Stomach (tissue), 19 donors: ENCODE measurements at regions of chr6 and their contacts with region 1.

Region 1: GRCh38 chr6:109059571-109060021 is 35.0 kb downstream of the SESN1 start:
- DNase-seq: peak in 1 of 2 donors; percentile 64
- H3K4me3 ChIP-seq: peak overlapping the region in 1 of 4 donors; percentile 2
- H3K27ac ChIP-seq: peak overlapping the region in 4 of 5 donors; percentile 42 to 79 (median 70)
- H3K4me1 ChIP-seq: peaks cover 16 to 62% (median 35%) of the 10 kb centered on the region in 4 donors
- H3K27me3 ChIP-seq: no peaks in the 10 kb centered on the region
- CTCF ChIP-seq: peak in 4 of 7 experiments; percentile 6 to 41 (median 15)
- EP300 ChIP-seq: no peak
- POLR2A ChIP-seq: no peak

Region 2: GRCh38 chr6:108556861-108557544 is 502.6 kb before region 1 on chr6:
- intact Hi-C with region 1: no loop called
- DNase-seq: peak in 1 of 2 donors; percentile 65
- H3K4me3 ChIP-seq: peak overlapping the region; percentile 89 to 96 (median 92)
- H3K27ac ChIP-seq: peak overlapping the region; percentile 99 to 100 (median 100)
- H3K4me1 ChIP-seq: peaks cover 10 to 21% (median 19%) of the 10 kb centered on the region in 4 donors
- H3K27me3 ChIP-seq: no peaks in the 10 kb centered on the region
- CTCF ChIP-seq: no peak
- EP300 ChIP-seq: no peak
- POLR2A ChIP-seq: no peak

Region 3: DNA sequence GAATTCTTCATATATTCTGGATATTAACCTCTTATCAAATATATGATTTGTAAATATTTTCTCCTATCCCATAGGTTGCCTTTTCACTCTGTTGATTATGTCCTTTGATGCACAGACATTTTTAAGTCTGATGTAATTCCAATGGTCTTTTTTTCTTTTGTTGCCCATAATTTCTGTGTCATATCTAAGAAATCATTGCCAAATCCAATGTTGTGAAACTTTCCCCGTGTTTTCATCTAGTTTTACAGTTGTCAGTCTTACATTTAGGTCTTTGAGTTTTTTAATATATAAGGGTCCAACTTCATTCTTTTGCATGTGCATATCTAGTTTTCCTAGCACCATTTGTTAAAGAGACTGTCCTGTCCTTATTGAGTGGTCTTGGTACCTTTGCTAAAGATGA is 76.4 kb before region 1 on chr6:
- intact Hi-C with region 1: no loop called
- DNase-seq: no peak
- H3K4me3 ChIP-seq: no peak overlapping the region
- H3K27ac ChIP-seq: no peak overlapping the region
- H3K4me1 ChIP-seq: peaks cover 11 to 25% (median 16%) of the 10 kb centered on the region in 4 donors
- H3K27me3 ChIP-seq: no peaks in the 10 kb centered on the region
- CTCF ChIP-seq: no peak
- EP300 ChIP-seq: no peak
- POLR2A ChIP-seq: no peak

Region 4: DNA sequence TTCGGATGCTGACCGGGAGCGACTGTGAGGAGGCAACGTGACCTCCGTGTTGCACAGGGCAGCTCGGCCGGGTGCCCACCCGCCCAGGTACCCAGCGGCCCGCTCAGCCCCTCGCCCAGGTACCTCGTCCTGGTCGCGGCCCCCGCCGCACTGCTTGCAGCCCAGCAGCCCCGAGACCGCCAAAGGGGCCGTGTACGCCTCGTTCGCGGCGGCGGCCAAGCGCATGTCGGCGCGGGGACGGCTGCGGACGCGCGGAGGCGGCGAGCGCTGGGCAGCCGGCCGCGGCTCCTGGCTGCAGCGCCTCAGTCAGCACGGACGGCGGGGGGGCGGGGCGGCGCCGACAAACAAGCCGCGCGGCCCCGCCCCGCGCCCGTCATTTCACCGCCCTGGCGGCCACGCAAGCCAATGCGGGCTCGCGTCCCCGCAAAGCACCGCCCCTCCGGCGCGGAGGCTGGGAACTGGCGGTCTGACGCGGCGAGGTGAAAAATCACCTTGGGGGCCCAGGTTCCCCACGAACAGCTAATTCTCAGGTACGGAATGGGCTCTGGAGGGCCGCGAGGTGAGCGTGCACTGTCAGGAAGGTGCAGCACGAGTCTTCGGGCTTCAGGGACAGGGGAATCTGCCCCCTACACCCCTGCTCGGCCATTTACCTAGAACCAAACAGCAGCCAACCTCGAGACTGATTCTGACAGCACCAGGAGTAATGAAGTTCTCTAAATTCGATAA is 50.2 kb before region 1 on chr6:
- intact Hi-C with region 1: loop called (anchors 10 kb)
- DNase-seq: peak; percentile 97 to 98
- H3K4me3 ChIP-seq: peak overlapping the region; percentile 62 to 88 (median 86)
- H3K27ac ChIP-seq: peak overlapping the region; percentile 93 to 99 (median 98)
- H3K4me1 ChIP-seq: peaks cover 7 to 66% (median 29%) of the 10 kb centered on the region in 4 donors
- H3K27me3 ChIP-seq: no peaks in the 10 kb centered on the region
- CTCF ChIP-seq: peak in 3 of 7 experiments; percentile 44 to 74 (median 47)
- EP300 ChIP-seq: peak; percentile 52
- POLR2A ChIP-seq: peak in 1 of 4 donors; percentile 50

Region 5: DNA sequence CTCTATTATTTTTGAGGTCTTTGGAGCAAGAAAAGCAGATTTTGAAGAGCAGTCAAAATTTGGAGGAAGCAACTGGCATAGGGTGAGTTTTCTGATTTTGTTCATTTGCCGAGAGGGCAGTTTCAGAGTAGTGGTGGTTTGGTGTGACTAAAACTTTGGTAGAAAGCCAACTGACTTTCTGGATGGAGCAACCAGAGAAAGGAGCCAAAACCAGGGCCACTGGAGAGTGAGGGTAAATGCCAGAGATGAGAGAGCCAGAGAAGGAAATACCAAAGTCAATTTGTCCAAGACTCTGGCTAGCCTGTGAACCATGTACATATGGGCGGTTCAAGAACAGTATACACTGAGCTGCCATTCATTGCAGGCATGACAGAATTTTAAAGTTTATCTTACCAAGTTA is 463.9 kb after region 1 on chr6:
- intact Hi-C with region 1: no loop called
- DNase-seq: no peak
- H3K4me3 ChIP-seq: no peak overlapping the region
- H3K27ac ChIP-seq: no peak overlapping the region
- H3K4me1 ChIP-seq: no peaks in the 10 kb centered on the region
- H3K27me3 ChIP-seq: no peaks in the 10 kb centered on the region
- CTCF ChIP-seq: no peak
- EP300 ChIP-seq: no peak
- POLR2A ChIP-seq: no peak

Region 6: DNA sequence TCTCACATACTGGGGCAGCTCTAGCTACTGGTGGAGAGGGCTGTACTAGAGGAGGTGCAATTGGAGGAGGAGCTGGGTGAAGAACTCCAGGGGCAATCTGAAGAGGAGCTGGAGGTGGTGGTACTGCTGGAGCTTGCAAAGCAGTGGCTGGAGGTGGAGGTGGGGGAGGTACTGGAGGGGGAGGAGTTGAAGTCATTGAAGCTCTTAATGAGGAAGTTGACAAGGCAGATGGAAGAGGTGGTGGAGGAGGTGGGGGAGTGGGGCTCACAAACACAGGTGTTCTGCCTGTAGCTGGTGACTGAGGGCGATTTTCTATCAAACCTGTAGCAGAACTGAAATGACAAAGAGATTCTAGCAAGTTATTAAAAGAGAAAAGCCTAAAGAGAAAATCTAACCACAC is 1042.3 kb after region 1 on chr6:
- intact Hi-C with region 1: no loop called
- DNase-seq: no peak
- H3K4me3 ChIP-seq: no peak overlapping the region
- H3K27ac ChIP-seq: no peak overlapping the region
- H3K4me1 ChIP-seq: peaks cover 0 to 10% (median 4%) of the 10 kb centered on the region in 4 donors
- H3K27me3 ChIP-seq: no peaks in the 10 kb centered on the region
- CTCF ChIP-seq: no peak
- EP300 ChIP-seq: no peak
- POLR2A ChIP-seq: no peak